Heart right ventricle (tissue), 16 donors: ENCODE measurements at regions of chr3 and their contacts with region 1.

Region 1: DNA sequence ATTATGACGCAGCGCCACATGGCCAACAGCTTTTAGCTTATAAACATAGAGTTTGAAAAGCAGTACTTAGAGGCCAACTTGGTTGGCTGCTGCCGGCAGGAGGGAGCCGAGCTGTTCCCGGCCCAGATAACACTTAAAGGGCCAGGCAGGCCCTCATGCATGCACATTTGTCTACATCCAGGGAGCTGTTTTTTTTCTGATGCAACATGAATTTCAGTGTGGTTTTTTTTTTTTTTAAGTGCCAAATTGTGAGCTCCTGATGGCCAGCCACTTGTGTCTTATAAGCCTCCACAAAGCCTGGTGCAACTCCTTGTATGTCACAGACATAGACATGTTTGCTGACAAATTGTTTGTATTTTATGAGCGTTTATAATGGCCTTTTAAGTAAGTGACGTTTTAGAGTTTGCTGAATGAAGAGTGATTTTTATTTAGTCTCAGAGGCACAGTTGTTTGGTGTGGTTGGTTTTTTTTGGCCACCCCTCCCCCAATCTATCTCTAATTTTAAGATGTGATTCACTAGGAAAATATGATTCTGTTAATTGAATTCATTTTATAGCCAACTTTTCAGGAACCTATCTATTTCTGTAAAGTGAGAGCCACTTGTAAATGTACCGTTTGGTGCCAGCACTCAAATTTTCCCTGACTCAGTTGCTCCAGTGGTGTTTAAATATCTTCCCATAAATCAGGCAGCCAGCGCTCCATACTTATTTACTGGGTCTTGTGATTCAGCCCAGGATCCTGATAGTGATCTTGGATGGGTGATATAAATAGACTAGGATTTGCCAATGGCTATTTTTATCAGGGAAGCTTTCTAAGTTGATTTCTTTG is 134.3 kb downstream of the VGLL4 start:
- DNase-seq: peak; percentile 68 to 71
- ATAC-seq: peak; percentile 88 to 96 (median 94)
- H3K4me3 ChIP-seq: peak overlapping the region in 1 of 10 donors; percentile 4
- H3K27ac ChIP-seq: peak overlapping the region; percentile 65 to 87 (median 75)
- H3K4me1 ChIP-seq: peaks cover 16 to 49% (median 44%) of the 10 kb centered on the region in 9 donors
- H3K27me3 ChIP-seq: no peaks in the 10 kb centered on the region
- CTCF ChIP-seq: peak in 4 of 9 donors; percentile 12 to 42 (median 38)

Region 2: GRCh38 chr3:10518506-10519150 is 990.8 kb before region 1 on chr3:
- intact Hi-C with region 1: no loop called
- DNase-seq: peak in 1 of 2 donors; percentile 27
- ATAC-seq: peak in 7 of 8 donors; percentile 38 to 83 (median 65)
- H3K4me3 ChIP-seq: no peak overlapping the region
- H3K27ac ChIP-seq: peak overlapping the region in 3 of 10 donors; percentile 11 to 52 (median 15)
- H3K4me1 ChIP-seq: peaks cover 0 to 31% (median 7%) of the 10 kb centered on the region in 9 donors
- H3K27me3 ChIP-seq: peaks cover 0 to 19% (median 3%) of the 10 kb centered on the region in 7 donors
- CTCF ChIP-seq: no peak

Region 3: GRCh38 chr3:11211531-11212298 is 297.7 kb before region 1 on chr3:
- intact Hi-C with region 1: no loop called
- DNase-seq: no peak
- ATAC-seq: peak in 1 of 8 donors; percentile 16
- H3K4me3 ChIP-seq: no peak overlapping the region
- H3K27ac ChIP-seq: no peak overlapping the region
- H3K4me1 ChIP-seq: peaks cover 0 to 25% (median 0%) of the 10 kb centered on the region in 9 donors
- H3K27me3 ChIP-seq: peaks cover 0 to 7% (median 0%) of the 10 kb centered on the region in 7 donors
- CTCF ChIP-seq: peak in 1 of 9 donors; percentile 9

Region 4: DNA sequence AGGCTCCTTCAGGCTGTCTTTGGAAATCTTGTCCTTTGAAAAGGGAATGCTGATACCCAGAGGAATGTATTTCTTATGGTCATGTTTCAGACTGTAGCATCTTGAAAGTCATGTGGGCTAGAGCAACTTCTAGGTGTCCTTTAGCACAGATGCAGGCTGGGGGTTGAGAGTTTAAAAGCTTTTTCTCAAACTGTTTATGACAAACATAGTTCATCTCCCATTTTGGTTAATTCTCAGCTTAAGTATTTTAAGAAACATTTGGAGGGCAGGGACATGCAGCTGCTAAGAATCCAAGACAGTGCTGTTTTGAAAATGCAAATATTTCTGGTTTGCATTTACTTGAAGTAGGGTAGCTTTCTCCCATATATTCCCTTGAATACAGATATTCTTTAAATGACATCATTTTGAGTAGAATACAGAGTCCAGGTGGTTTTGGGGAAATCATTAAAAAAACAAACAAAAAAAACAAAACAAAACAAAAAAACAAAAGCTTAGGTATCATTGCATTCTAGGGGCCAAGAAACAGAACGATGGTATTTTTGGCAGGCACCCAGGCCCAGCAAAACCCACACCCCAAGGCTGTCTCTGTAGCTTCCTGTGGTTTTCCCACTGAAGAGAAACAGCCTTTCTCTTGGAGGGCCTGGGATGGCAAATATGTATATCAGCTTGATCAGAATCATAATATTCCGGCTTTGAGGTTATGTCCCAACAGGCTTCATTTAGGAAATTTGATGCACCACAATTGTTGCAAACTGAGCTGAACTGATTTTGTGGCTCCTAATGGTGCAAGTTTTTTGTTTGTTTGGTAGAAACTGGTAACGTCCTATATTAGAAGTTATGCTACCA is 117.2 kb before region 1 on chr3:
- intact Hi-C with region 1: loop called in 1 of 10 experiments (anchors 10 kb)
- DNase-seq: no peak
- ATAC-seq: no peak
- H3K4me3 ChIP-seq: no peak overlapping the region
- H3K27ac ChIP-seq: peak overlapping the region in 3 of 10 donors; percentile 0 to 50 (median 27)
- H3K4me1 ChIP-seq: peaks cover 12 to 33% (median 28%) of the 10 kb centered on the region in 9 donors
- H3K27me3 ChIP-seq: no peaks in the 10 kb centered on the region
- CTCF ChIP-seq: no peak

Region 5: GRCh38 chr3:11400213-11400612 is 109.2 kb before region 1 on chr3:
- intact Hi-C with region 1: loop called in 2 of 10 experiments (anchors 10 kb)
- DNase-seq: no peak
- ATAC-seq: no peak
- H3K4me3 ChIP-seq: no peak overlapping the region
- H3K27ac ChIP-seq: no peak overlapping the region
- H3K4me1 ChIP-seq: no peaks in the 10 kb centered on the region
- H3K27me3 ChIP-seq: no peaks in the 10 kb centered on the region
- CTCF ChIP-seq: no peak

Region 6: DNA sequence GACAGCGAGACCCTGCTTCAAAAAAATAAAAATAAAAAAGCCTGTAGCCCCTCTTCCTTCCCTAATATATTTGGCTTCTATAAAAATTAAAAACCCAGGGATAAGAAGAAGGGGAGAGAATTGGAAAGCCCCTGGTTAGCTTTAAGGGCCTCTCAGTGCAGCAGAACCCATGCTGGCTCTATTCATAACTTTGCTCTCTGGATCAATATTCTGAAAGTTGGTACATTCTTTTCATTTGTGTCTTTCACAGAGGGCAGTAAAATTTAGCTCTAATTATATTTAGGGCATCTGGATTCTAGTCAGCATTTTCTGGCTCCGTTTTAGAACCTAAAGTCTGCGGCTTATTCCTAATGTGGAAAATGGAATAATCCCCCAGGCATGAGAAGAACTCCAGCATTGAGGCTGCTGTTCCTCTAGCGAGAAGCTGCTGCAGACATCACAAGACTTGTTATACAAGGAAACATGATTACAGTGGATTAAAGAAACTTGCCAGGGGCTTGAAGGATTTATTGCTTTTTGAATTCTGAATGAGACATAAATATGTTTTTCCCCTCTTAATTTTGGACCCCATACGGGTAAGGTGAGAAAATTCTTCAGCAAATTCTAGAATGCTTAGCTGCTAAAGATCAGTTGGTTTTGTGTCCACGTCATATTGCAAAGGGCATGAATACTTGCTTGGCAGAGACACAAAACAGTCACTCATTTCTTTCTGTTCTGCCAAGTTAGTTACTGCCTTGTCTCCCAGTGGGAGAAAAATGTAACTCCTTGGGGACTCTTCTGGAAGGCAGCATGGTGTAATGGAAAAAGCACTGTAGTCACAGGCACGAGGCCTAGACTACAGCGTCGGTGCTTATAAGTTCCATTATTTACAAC is 43.4 kb before region 1 on chr3:
- intact Hi-C with region 1: loop called in 1 of 10 experiments (anchors 2 kb)
- DNase-seq: peak in 1 of 2 donors; percentile 83
- ATAC-seq: peak; percentile 88 to 95 (median 92)
- H3K4me3 ChIP-seq: no peak overlapping the region
- H3K27ac ChIP-seq: peak overlapping the region; percentile 52 to 95 (median 86)
- H3K4me1 ChIP-seq: peaks cover 2 to 35% (median 28%) of the 10 kb centered on the region in 9 donors
- H3K27me3 ChIP-seq: no peaks in the 10 kb centered on the region
- CTCF ChIP-seq: no peak

Region 7: DNA sequence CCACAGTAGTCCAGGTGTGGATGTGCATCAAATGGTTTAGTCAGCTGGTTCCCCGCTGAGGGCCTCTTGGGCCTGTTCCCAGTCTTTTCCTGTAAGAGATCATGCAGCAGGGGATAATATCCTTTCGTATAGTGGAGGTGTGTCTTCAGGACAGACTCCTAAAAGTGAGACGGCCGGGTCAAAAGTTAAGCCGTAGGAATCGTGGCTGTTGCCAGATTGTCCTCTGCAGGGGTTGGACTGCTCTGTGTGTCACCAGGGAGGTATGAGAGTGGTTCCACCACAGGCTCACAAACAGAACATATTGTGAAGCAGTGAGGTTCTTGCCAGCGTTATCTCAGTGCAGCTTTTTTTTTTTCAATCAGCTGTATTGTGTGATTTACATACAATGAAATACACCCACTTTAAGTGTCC is 39.3 kb after region 1 on chr3:
- intact Hi-C with region 1: loop called in 1 of 10 experiments (anchors 5 kb)
- DNase-seq: no peak
- ATAC-seq: peak in 6 of 8 donors; percentile 6 to 60 (median 38)
- H3K4me3 ChIP-seq: no peak overlapping the region
- H3K27ac ChIP-seq: peak overlapping the region in 7 of 10 donors; percentile 7 to 56 (median 36)
- H3K4me1 ChIP-seq: peaks cover 6 to 70% (median 34%) of the 10 kb centered on the region in 9 donors
- H3K27me3 ChIP-seq: no peaks in the 10 kb centered on the region
- CTCF ChIP-seq: no peak